ENCODE measurements at regions of chr10 and their contacts with region 1.

Region 1: GRCh38 chr10:80599424-80599847 is 61.7 kb downstream of the SH2D4B start:
- DNase-seq: peak; percentile 81
- ATAC-seq: peak; percentile 64

Region 2: GRCh38 chr10:80662577-80663261 is 63.3 kb after region 1 on chr10:
- intact Hi-C with region 1: loop called (anchors 5 kb)
- DNase-seq: peak; percentile 92
- ATAC-seq: peak; percentile 86